PC-9 (cell line): ENCODE measurements at regions of chr9 and their contacts with region 1.

Region 1: GRCh38 chr9:71768388-71769174 is at the start of gene CEMIP2:
- DNase-seq: peak; percentile 70 to 93
- H3K4me3 ChIP-seq: peak within 1 kb of the TSS; percentile 81
- H3K27ac ChIP-seq: peak within 1 kb of the TSS; percentile 68
- H3K4me1 ChIP-seq: peaks cover 49% of the 10 kb centered on the region
- H3K27me3 ChIP-seq: no peaks in the 10 kb centered on the region
- CTCF ChIP-seq: no peak
- total RNA-seq, gene CEMIP2: 60.7 and 77.0 TPM in 2 replicates

Region 2: DNA sequence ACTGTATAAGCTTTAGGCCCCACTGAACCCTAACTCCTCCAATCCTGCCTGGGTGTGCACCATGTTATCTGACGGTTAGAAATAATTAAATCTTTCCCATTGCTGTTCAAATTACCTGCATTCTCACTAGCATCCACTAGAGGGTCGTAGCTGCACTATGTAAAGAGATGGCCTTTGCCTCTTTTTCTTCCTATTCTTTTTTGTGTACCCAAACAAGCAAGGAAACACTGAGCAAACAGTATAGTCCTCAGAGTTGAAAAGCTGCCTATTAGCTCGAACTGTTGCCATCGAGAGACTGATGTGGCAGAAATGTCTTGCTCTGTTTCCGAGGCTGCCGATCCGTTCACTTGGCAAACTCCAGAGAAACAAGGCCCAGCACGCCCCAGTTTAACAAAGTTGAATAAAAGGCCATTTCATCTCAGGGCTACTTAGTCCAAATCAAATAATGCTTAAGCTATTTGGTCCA is 483.4 kb before region 1 on chr9:
- CTCF ChIA-PET with region 1: no interaction called
- POLR2A ChIA-PET with region 1: no interaction called
- intact Hi-C with region 1: loop called (anchors 1 kb)
- DNase-seq: peak; percentile 49 to 55
- H3K4me3 ChIP-seq: no peak overlapping the region
- H3K27ac ChIP-seq: no peak overlapping the region
- H3K4me1 ChIP-seq: no peaks in the 10 kb centered on the region
- H3K27me3 ChIP-seq: no peaks in the 10 kb centered on the region
- CTCF ChIP-seq: peak; percentile 92

Region 3: GRCh38 chr9:71490810-71491209 is 277.8 kb before region 1 on chr9:
- CTCF ChIA-PET with region 1: no interaction called
- POLR2A ChIA-PET with region 1: no interaction called
- intact Hi-C with region 1: loop called (anchors 10 kb)
- DNase-seq: no peak
- H3K4me3 ChIP-seq: no peak overlapping the region
- H3K27ac ChIP-seq: no peak overlapping the region
- H3K4me1 ChIP-seq: peaks cover 7% of the 10 kb centered on the region
- H3K27me3 ChIP-seq: no peaks in the 10 kb centered on the region
- CTCF ChIP-seq: peak; percentile 48; the same call in 1 of the 2 replicates

Region 4: GRCh38 chr9:71683598-71684235 is 84.9 kb before region 1 on chr9:
- CTCF ChIA-PET with region 1: no interaction called
- POLR2A ChIA-PET with region 1: interaction called, 7 read pairs
- intact Hi-C with region 1: loop called (anchors 1 kb)
- DNase-seq: no peak
- H3K4me3 ChIP-seq: no peak overlapping the region
- H3K27ac ChIP-seq: no peak overlapping the region
- H3K4me1 ChIP-seq: peaks cover 88% of the 10 kb centered on the region
- H3K27me3 ChIP-seq: no peaks in the 10 kb centered on the region
- CTCF ChIP-seq: no peak

Region 5: GRCh38 chr9:71725590-71726338 is 42.8 kb before region 1 on chr9:
- CTCF ChIA-PET with region 1: interaction called, 3 read pairs
- POLR2A ChIA-PET with region 1: no interaction called
- intact Hi-C with region 1: loop called (anchors 1 kb)
- DNase-seq: peak; percentile 53 to 97
- H3K4me3 ChIP-seq: no peak overlapping the region
- H3K27ac ChIP-seq: peak overlapping the region; percentile 7; the same call in 1 of the 2 replicates
- H3K4me1 ChIP-seq: peaks cover 25% of the 10 kb centered on the region
- H3K27me3 ChIP-seq: no peaks in the 10 kb centered on the region
- CTCF ChIP-seq: no peak

Region 6: GRCh38 chr9:72371151-72371550 is 602.6 kb after region 1 on chr9:
- CTCF ChIA-PET with region 1: interaction called, 10 read pairs
- POLR2A ChIA-PET with region 1: no interaction called
- intact Hi-C with region 1: no loop called
- DNase-seq: no peak
- H3K4me3 ChIP-seq: no peak overlapping the region
- H3K27ac ChIP-seq: no peak overlapping the region
- H3K4me1 ChIP-seq: peaks cover 14% of the 10 kb centered on the region
- H3K27me3 ChIP-seq: no peaks in the 10 kb centered on the region
- CTCF ChIP-seq: no peak